Calu3 (cell line): ENCODE measurements at regions of chrX and their contacts with region 1.

Region 1: DNA sequence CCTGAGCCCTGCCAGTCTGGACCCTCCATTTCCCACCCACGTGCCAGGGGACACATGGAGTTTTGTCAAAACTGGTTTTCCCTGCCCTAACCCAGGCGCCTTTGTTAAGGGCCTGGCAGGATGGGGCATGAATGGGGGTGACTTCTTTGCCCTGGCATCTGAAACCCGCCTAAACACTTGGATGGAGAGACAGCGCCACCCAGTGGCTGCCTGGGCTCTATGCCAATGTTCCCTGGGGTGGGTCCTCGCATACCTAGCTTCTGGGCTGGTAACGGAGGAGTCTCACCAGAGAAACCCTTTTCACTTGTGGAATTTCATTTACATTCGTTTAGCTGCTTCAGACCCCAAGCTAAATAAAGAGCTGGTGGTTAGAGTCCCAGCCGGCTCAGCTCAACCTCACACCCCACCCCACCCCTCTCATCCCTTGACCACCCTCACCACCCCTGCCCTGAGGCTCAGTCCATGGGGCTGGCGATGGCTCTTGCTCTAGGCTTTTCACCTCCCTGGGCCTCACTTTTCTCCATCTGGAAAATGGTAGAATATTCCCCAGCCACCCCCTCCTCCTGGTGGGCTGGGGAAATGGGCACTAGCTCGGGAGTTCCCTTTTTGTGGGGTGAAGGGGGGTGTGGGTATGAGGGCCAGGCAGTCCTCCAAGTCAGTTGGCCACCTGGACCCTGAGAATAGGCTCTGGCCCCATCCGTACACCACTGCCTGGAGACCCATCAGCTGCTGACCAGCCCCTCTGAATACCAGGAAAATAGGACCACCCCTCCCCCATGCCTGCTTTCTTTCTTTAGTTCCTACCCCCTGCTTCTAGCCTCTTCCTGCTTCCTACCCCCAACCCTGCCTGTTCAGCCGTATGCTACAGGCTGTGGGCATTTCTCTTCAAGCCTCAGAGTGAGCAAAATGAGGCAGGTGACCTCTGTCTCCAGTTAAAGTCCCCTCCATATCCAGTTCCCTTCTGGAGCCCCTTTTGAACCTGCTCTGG is 57.1 kb upstream of the PJA1 start:
- DNase-seq: peak; percentile 79
- H3K4me3 Mint-ChIP-seq: no peak overlapping the region
- H3K27ac Mint-ChIP-seq: no peak overlapping the region
- H3K4me1 Mint-ChIP-seq: no peaks in the 10 kb centered on the region
- H3K27me3 Mint-ChIP-seq: no peaks in the 10 kb centered on the region
- CTCF ChIP-seq: peak; percentile 76

Region 2: GRCh38 chrX:68556029-68556428 is 666.4 kb before region 1 on chrX:
- CTCF ChIA-PET with region 1: no interaction called
- intact Hi-C with region 1: no loop called
- DNase-seq: no peak
- H3K4me3 Mint-ChIP-seq: no peak overlapping the region
- H3K27ac Mint-ChIP-seq: no peak overlapping the region
- H3K4me1 Mint-ChIP-seq: no peaks in the 10 kb centered on the region
- H3K27me3 Mint-ChIP-seq: no peaks in the 10 kb centered on the region
- CTCF ChIP-seq: no peak

Region 3: GRCh38 chrX:68822641-68823410 is 399.6 kb before region 1 on chrX:
- CTCF ChIA-PET with region 1: interaction called, 18 read pairs
- intact Hi-C with region 1: loop called (anchors 1 kb)
- DNase-seq: peak; percentile 46
- H3K4me3 Mint-ChIP-seq: no peak overlapping the region
- H3K27ac Mint-ChIP-seq: no peak overlapping the region
- H3K4me1 Mint-ChIP-seq: peaks cover 4% of the 10 kb centered on the region
- H3K27me3 Mint-ChIP-seq: peaks cover 24% of the 10 kb centered on the region
- CTCF ChIP-seq: peak; percentile 29

Region 4: DNA sequence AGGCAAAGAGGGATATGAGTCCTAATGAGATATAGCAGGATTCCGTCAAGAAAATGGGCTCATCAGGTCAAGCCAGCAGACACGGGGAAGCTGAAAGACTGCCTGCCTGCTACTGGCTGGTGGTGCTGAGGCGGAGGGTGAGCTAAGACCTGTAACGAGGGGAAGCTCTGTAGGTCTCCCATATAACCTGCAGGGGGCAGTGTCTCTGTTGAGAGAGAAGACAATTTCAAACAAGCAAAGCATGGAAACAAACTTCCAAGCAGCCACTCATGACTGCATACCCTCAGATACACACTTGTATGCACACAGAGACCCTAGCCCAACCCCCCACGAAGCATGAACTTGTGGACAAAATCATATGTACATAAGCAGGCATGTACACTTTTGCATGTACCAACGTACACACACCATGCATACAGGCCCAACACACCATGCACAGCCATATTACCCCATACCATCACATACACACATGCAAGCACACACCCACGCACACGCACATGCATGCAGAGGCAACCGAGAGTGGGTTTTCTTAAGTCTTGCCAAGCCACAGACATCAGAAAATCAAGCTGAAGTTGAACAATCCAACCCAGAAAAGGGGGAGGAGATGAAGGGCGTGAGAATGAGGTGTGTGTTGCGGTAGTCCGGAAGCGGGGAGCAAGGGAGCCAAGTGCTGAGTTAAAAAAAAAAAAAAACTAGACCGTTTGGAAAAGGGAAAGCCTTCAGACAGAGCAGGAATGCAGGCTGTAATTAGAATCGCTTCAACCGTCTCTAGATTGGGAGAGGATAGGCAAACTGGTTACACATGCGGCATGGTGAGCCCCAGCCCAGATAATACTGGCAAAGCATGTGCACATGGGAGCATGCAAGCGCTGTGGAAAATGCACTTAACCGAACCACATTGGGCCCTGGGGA is 128.2 kb before region 1 on chrX:
- CTCF ChIA-PET with region 1: interaction called, 4 read pairs
- intact Hi-C with region 1: loop called (anchors 1 kb)
- DNase-seq: peak; percentile 44
- H3K4me3 Mint-ChIP-seq: no peak overlapping the region
- H3K27ac Mint-ChIP-seq: no peak overlapping the region
- H3K4me1 Mint-ChIP-seq: no peaks in the 10 kb centered on the region
- H3K27me3 Mint-ChIP-seq: no peaks in the 10 kb centered on the region
- CTCF ChIP-seq: peak; percentile 43

Region 5: GRCh38 chrX:69133921-69134542 is 88.4 kb before region 1 on chrX:
- CTCF ChIA-PET with region 1: interaction called, 12 read pairs
- intact Hi-C with region 1: loop called (anchors 1 kb)
- DNase-seq: peak; percentile 70
- H3K4me3 Mint-ChIP-seq: no peak overlapping the region
- H3K27ac Mint-ChIP-seq: no peak overlapping the region
- H3K4me1 Mint-ChIP-seq: peaks cover 14% of the 10 kb centered on the region
- H3K27me3 Mint-ChIP-seq: peaks cover 16% of the 10 kb centered on the region
- CTCF ChIP-seq: peak; percentile 51

Region 6: DNA sequence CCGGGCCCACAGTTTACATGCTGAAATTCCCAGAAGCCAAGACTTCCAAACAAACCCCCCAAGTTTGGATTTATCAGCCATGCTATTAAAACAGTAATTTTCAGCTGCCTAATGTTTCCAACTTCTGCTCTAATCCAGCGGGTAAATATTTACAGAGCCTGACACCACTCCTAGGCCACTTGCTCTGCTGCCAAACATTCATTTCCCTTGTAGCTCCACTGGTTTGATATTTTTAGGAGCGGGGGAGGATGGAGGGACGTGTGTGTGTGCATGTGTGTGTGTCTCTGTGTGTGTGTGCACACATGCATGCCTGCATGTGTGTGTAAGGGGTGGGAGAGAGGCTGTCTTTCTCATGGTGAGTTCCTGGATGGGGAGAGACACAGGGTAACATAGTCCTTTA is 58.5 kb after region 1 on chrX:
- CTCF ChIA-PET with region 1: no interaction called
- intact Hi-C with region 1: loop called (anchors 5 kb)
- DNase-seq: no peak
- H3K4me3 Mint-ChIP-seq: no peak overlapping the region
- H3K27ac Mint-ChIP-seq: no peak overlapping the region
- H3K4me1 Mint-ChIP-seq: peaks cover 8% of the 10 kb centered on the region
- H3K27me3 Mint-ChIP-seq: peaks cover 13% of the 10 kb centered on the region
- CTCF ChIP-seq: no peak